ENCODE measurements at regions of chr1 and their contacts with region 1.

Region 1: DNA sequence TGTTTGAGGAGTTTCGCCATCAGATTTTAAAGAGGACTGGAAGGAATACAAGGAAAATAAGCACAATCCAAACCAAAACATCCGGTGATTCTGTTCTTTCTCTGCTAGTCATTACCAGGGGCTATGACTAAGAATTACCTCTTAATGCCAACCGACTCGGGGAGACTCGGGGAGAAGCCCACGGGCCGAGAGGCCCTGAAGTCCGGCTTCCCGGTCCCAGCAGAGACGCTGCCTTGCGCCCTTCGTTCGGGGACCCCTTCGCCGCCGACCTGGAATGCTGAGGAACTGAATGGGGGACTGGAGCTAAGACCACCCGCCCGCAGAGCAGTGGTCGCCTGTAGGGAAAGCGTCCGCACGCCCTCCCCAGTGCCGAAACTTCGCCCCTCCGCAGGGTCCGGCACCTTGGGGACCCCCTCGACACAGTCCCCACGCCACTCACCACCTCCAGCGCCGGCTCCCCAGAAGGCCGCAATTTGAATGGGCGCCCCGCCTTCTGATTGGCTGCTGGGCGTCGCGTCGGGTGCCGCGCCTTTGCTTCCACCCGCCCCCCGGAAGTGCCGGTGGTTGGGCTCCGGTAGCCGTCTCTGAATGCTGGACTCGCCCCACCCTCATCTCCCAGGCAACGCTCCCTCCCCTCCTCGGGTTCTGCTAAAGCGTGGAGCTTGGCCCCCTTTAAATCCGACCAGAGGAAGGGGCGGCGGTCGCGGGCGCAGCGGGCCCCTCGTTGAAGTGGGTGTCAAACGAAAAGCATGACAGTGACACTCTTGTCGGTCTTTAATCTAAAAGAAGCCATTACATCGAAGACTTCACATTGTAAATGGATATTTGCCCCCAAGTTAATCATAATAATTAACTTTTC is at the start of gene KIF14:
- DNase-seq: peak; percentile 93
- ATAC-seq: peak; percentile 97
- H3K4me3 ChIP-seq: peak within 1 kb of the TSS; percentile 68 to 98 (median 72)
- H3K4me3 Mint-ChIP-seq: peak within 1 kb of the TSS; percentile 94
- H3K27ac ChIP-seq: peak within 1 kb of the TSS; percentile 64 to 77
- H3K27ac Mint-ChIP-seq: peak within 1 kb of the TSS; percentile 90
- H3K4me1 ChIP-seq: peaks cover 5 to 15% of the 10 kb centered on the region in 2 donors
- H3K4me1 Mint-ChIP-seq: peaks cover 9% of the 10 kb centered on the region
- H3K27me3 ChIP-seq: no peaks in the 10 kb centered on the region
- H3K27me3 Mint-ChIP-seq: no peaks in the 10 kb centered on the region
- CTCF ChIP-seq: no peak
- total RNA-seq, gene KIF14: 0.05 and 0.15 TPM in 2 replicates

Region 2: GRCh38 chr1:200139661-200140250 is 480.7 kb before region 1 on chr1:
- CTCF ChIA-PET with region 1: no interaction called
- POLR2A ChIA-PET with region 1: no interaction called
- intact Hi-C with region 1: no loop called
- DNase-seq: peak; percentile 71
- ATAC-seq: peak; percentile 86
- H3K4me3 ChIP-seq: no peak overlapping the region
- H3K4me3 Mint-ChIP-seq: no peak overlapping the region
- H3K27ac ChIP-seq: no peak overlapping the region
- H3K27ac Mint-ChIP-seq: no peak overlapping the region
- H3K4me1 ChIP-seq: no peaks in the 10 kb centered on the region
- H3K4me1 Mint-ChIP-seq: peaks cover 2% of the 10 kb centered on the region
- H3K27me3 ChIP-seq: no peaks in the 10 kb centered on the region
- H3K27me3 Mint-ChIP-seq: no peaks in the 10 kb centered on the region
- CTCF ChIP-seq: peak; percentile 86

Region 3: DNA sequence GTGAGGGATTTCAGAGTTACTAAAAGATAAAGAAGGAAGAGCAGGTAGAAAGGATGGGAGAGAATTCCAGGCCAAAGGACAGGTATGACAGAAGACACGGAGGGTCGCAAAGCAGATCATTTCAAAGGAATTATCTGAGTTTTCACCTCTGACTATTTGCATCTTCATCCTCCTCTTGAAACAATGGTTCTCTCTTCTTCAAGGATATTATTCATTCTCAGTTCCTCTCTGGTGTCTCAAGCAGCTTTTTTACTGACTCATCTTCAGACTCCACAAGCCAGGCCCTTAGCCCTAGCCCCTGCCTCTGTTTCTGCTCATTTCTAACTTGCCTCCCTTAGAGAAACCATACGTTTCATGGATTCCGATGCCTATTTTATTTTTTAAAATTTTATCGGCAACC is 34.2 kb after region 1 on chr1:
- CTCF ChIA-PET with region 1: interaction called, 11 read pairs
- POLR2A ChIA-PET with region 1: no interaction called
- intact Hi-C with region 1: no loop called
- DNase-seq: no peak
- ATAC-seq: no peak
- H3K4me3 ChIP-seq: no peak overlapping the region
- H3K4me3 Mint-ChIP-seq: no peak overlapping the region
- H3K27ac ChIP-seq: no peak overlapping the region
- H3K27ac Mint-ChIP-seq: peak overlapping the region; percentile 1
- H3K4me1 ChIP-seq: peaks cover 0 to 7% of the 10 kb centered on the region in 2 donors
- H3K4me1 Mint-ChIP-seq: peaks cover 24% of the 10 kb centered on the region
- H3K27me3 ChIP-seq: no peaks in the 10 kb centered on the region
- H3K27me3 Mint-ChIP-seq: no peaks in the 10 kb centered on the region
- CTCF ChIP-seq: no peak

Region 4: DNA sequence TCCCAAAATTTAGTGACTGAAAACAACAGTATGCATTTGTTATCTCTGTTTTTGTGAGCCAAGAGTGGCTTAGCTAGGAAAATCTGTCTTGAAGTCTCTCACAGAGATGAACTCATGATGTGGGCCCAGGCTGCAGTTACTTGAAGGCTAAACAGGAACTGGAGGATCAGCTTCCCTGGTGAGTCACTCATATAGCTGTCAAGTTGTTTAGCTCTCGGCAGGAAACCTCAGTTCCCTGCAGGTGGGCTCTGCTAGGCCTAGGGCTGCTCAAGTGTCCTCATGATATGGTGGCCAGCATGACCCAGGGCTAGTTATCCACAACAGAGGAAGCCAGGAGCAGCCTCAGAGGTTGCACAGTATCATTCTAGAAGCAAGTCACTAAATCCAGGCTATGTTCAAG is 79.4 kb after region 1 on chr1:
- CTCF ChIA-PET with region 1: no interaction called
- POLR2A ChIA-PET with region 1: no interaction called
- intact Hi-C with region 1: no loop called
- DNase-seq: no peak
- ATAC-seq: no peak
- H3K4me3 ChIP-seq: no peak overlapping the region
- H3K4me3 Mint-ChIP-seq: no peak overlapping the region
- H3K27ac ChIP-seq: no peak overlapping the region
- H3K27ac Mint-ChIP-seq: no peak overlapping the region
- H3K4me1 ChIP-seq: no peaks in the 10 kb centered on the region
- H3K4me1 Mint-ChIP-seq: no peaks in the 10 kb centered on the region
- H3K27me3 ChIP-seq: no peaks in the 10 kb centered on the region
- H3K27me3 Mint-ChIP-seq: peaks cover 7% of the 10 kb centered on the region
- CTCF ChIP-seq: no peak

Region 5: DNA sequence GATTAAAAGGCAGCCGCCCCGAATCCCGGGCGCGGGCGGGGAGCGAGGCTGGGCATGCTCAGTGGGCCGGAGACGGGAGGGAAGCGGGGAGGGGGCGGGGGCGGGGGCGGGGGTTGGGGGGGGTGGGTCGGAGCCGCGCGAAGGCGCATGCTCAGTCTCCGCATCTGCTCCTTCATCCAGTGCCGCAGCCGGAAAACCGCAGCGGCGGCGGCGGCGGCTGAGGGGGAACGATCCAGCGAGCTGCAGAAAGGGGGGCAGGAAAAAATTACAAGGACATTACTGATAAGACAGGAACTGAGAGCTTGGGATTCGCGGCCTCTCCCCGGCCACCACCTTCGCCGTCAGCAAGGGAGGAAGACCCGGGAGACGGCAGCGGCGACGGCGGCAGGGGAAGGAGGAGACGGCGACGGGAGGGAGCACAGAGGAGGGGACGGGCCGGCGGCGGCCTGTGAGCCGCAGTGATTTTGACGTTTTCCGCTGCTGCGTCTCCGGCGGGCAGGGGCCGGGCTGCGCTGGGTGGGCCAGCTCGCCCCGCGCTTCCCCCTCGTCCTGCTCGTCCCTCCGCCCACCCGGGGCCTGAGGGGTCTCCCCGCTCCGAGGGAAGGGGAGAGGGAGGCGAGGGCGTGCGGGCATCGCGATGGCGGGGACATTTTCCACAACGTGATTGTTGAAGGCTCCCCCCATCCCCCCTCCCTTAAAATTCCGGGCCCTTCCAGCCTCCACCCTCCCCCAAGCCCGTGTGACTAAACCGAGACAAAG is 118.4 kb after region 1 on chr1 and contains the start of gene CAMSAP2:
- CTCF ChIA-PET with region 1: interaction called, 12 read pairs
- POLR2A ChIA-PET with region 1: no interaction called
- intact Hi-C with region 1: loop called (anchors 2 kb)
- DNase-seq: peak; percentile 62
- ATAC-seq: peak; percentile 69
- H3K4me3 ChIP-seq: peak within 1 kb of the TSS; percentile 58 to 71 (median 62)
- H3K4me3 Mint-ChIP-seq: peak within 1 kb of the TSS; percentile 96
- H3K27ac ChIP-seq: no peak within 1 kb of the TSS
- H3K27ac Mint-ChIP-seq: peak within 1 kb of the TSS; percentile 80
- H3K4me1 ChIP-seq: peaks cover 13% of the 10 kb centered on the region in 2 donors
- H3K4me1 Mint-ChIP-seq: peaks cover 17% of the 10 kb centered on the region
- H3K27me3 ChIP-seq: peaks cover 0 to 11% (median 6%) of the 10 kb centered on the region in 4 experiments
- H3K27me3 Mint-ChIP-seq: peaks cover 23% of the 10 kb centered on the region
- CTCF ChIP-seq: no peak
- total RNA-seq, gene CAMSAP2: 1.4 and 2.1 TPM in 2 replicates

Region 6: GRCh38 chr1:200802865-200803512 is 182.5 kb after region 1 on chr1:
- CTCF ChIA-PET with region 1: interaction called, 168 read pairs
- POLR2A ChIA-PET with region 1: no interaction called
- intact Hi-C with region 1: no loop called
- DNase-seq: peak; percentile 81
- ATAC-seq: peak; percentile 88
- H3K4me3 ChIP-seq: no peak overlapping the region
- H3K4me3 Mint-ChIP-seq: no peak overlapping the region
- H3K27ac ChIP-seq: no peak overlapping the region
- H3K27ac Mint-ChIP-seq: no peak overlapping the region
- H3K4me1 ChIP-seq: no peaks in the 10 kb centered on the region
- H3K4me1 Mint-ChIP-seq: no peaks in the 10 kb centered on the region
- H3K27me3 ChIP-seq: peaks cover 0 to 2% (median 0%) of the 10 kb centered on the region in 4 experiments
- H3K27me3 Mint-ChIP-seq: peaks cover 3% of the 10 kb centered on the region
- CTCF ChIP-seq: peak; percentile 98

Region 7: GRCh38 chr1:200837931-200838571 is 217.5 kb after region 1 on chr1:
- CTCF ChIA-PET with region 1: interaction called, 14 read pairs
- POLR2A ChIA-PET with region 1: no interaction called
- intact Hi-C with region 1: loop called (anchors 1 kb)
- DNase-seq: peak; percentile 8
- ATAC-seq: no peak
- H3K4me3 ChIP-seq: no peak overlapping the region
- H3K4me3 Mint-ChIP-seq: no peak overlapping the region
- H3K27ac ChIP-seq: no peak overlapping the region
- H3K27ac Mint-ChIP-seq: no peak overlapping the region
- H3K4me1 ChIP-seq: no peaks in the 10 kb centered on the region
- H3K4me1 Mint-ChIP-seq: no peaks in the 10 kb centered on the region
- H3K27me3 ChIP-seq: no peaks in the 10 kb centered on the region
- H3K27me3 Mint-ChIP-seq: no peaks in the 10 kb centered on the region
- CTCF ChIP-seq: peak; percentile 73

Region 8: DNA sequence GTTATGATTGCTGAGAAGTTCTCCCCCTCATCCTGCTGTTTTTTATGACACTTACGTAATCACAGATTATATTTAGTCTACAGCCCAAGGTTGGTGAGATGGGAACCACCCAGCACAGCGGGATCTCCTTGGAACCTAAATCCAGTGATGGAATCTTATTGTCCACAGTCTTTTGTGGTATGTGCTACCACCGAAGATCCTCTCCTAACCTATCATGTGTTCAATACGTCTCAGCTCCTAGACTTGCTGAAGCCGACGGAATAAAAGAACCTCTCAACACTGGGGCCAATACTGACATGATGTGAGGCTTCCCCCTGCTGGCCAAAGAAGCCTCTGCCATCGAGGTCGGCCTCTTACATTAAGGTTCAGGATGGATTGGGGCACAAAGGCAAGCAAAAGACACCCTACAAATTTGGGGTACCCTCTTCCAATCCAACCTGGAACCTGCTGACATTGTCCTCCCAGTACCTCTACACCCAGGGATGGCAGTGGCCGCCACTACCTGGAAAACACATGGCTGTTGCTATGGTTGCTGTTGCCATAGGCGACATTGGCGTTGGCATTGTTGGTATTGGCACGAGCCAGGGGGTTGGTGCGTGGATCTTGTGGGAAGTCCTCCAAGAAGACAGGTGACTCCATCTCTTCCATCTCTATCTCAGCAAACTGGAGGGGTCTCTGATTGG is 422.4 kb after region 1 on chr1:
- CTCF ChIA-PET with region 1: interaction called, 5 read pairs
- POLR2A ChIA-PET with region 1: no interaction called
- intact Hi-C with region 1: loop called (anchors 1 kb)
- DNase-seq: peak; percentile 81
- ATAC-seq: peak; percentile 91
- H3K4me3 ChIP-seq: no peak overlapping the region
- H3K4me3 Mint-ChIP-seq: no peak overlapping the region
- H3K27ac ChIP-seq: no peak overlapping the region
- H3K27ac Mint-ChIP-seq: peak overlapping the region; percentile 1
- H3K4me1 ChIP-seq: peaks cover 0 to 2% of the 10 kb centered on the region in 2 donors
- H3K4me1 Mint-ChIP-seq: peaks cover 3% of the 10 kb centered on the region
- H3K27me3 ChIP-seq: peaks cover 0 to 3% (median 1%) of the 10 kb centered on the region in 4 experiments
- H3K27me3 Mint-ChIP-seq: peaks cover 3% of the 10 kb centered on the region
- CTCF ChIP-seq: peak; percentile 93